Ascending aorta (tissue), 2 donors: ENCODE measurements at regions of chr2 and their contacts with region 1.

Region 1: DNA sequence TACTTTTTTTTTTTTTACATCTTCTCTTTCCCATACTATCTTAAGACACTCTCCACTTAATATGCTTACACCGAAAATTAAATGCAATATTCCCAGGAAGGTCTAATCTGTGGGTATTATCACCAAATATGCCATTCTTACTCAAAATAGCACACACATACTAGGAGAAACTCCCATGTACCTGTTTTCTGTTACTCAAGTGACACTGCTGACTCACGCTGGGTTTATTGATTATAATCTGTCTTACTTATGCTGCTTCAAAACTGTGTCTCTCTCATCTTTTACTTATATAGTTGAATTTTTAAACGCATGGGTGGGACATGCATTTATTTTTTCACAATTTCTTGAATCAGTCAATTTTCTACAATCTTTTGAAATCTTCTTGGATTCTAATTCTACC is 29.9 kb downstream of the MRPL19 start:
- DNase-seq: no peak
- H3K4me3 ChIP-seq: no peak overlapping the region
- H3K27ac ChIP-seq: no peak overlapping the region
- H3K4me1 ChIP-seq: no peaks in the 10 kb centered on the region
- H3K27me3 ChIP-seq: no peaks in the 10 kb centered on the region
- CTCF ChIP-seq: no peak

Region 2: DNA sequence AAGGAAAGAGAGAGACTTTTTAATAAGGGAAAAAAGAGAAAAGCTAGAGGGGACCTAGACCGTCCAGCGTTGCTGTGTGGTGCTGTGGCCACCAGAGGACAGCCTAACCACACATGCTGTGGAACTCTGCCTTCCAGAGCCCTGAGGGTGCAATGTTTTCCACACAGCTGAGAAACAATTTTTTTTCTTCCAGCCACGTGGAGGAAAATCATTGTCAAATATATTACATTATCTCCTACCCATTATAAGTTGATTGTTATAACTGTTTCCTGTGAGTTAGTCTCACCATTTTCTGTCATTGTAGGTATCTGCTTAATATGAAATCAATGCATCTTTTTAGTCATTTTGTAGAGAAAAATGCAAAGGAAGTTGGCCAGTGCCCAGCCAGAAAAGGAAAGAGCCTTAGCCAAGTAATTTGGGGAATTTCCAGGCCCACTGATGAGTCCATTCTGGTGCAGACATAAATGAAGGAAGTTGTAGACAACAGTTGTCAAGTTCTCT is 35.8 kb before region 1 on chr2:
- intact Hi-C with region 1: loop called (anchors 2 kb)
- DNase-seq: peak in 1 of 2 donors; percentile 67
- H3K4me3 ChIP-seq: no peak overlapping the region
- H3K27ac ChIP-seq: no peak overlapping the region
- H3K4me1 ChIP-seq: no peaks in the 10 kb centered on the region
- H3K27me3 ChIP-seq: no peaks in the 10 kb centered on the region
- CTCF ChIP-seq: peak; percentile 74 to 98 (median 96)

Region 3: GRCh38 chr2:75729861-75730260 is 53.4 kb after region 1 on chr2:
- intact Hi-C with region 1: no loop called
- DNase-seq: no peak
- H3K4me3 ChIP-seq: no peak overlapping the region
- H3K27ac ChIP-seq: no peak overlapping the region
- H3K4me1 ChIP-seq: no peaks in the 10 kb centered on the region
- H3K27me3 ChIP-seq: no peaks in the 10 kb centered on the region
- CTCF ChIP-seq: no peak